GM10248 (cell line): ENCODE measurements at regions of chr16 and their contacts with region 1.

Region 1: DNA sequence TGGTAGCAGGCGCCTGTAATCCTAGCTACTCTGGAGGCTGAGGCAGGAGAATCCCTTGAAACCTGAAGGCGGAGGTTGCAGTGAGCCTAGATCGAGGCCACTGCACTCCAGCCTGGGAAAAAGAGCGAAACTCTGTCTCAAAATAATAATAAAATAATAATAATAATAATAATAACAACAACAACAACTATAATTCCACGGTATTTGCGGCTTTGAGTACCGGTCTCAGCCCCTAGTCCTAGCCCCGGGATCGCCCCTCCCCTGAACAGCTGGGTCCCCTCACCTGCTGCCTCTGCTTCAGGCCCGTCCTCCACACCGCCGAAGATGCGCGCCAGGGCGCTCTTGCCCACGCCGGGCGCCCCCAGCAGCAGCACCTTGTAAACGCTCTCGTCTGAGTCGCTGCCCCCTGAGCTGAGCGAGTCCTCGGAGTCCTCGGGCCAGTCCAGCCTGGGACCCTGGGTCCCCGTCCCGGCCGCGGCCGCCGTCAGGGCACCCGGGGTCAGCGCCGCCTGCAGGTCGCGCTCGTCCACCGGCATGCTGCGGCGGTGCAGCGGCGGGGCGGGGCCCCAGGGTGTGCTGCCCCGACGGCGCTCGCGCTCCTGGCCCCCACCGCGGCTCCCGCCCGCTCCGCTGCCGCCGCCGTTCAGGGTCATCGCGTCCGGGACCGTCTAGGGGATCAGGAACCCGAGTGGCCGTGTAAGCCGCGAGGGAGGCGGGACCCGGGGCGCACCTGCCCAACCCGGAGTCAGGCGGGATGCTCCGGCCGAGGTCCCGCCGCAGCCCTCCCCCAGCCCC is 611 bp downstream of the RRAD start:
- DNase-seq: peak; percentile 83
- CTCF ChIP-seq: peak; percentile 60

Region 2: DNA sequence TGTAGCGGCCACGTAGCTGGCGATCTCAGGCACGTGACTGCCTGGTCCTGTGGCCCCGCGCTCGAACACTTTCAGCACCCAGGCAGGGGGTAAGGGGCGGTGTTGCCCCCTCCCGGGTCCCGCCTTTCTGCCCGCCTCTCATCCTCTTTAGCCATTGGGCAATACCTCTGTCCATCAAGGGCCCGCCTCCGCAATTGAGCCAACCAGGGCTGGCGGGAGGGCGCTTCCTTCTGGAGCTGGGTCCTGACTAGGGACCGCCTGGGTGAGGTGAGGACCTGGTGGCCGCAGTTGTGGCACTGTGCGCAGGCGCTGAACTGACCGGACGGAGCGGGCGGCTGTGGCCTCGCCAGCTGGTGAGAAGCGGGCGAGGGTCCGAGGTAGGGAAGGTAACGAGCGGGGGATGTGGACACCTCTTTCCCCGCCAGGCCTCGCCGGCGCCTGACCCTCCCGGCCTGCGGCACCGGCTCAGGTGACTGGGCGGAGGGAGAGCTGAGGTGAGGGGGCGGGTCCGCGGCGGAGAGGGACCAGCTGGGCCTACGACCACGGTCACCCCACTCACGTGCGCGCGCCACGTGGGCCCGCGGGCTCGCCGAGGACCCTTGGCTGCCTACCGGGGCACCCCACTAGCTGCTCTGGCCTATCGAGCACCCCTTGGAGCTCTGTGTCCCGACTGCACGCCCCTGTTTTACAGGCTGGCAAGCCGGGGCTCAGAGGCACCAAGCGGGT is 44.3 kb before region 1 on chr16 and contains the start of gene PDP2:
- CTCF ChIA-PET with region 1: interaction called, 10 read pairs
- POLR2A ChIA-PET with region 1: no interaction called
- DNase-seq: peak; percentile 96
- CTCF ChIP-seq: no peak

Region 3: GRCh38 chr16:66886346-66886745 is 38.4 kb before region 1 on chr16:
- CTCF ChIA-PET with region 1: interaction called, 115 read pairs
- POLR2A ChIA-PET with region 1: interaction called, 3 read pairs
- DNase-seq: no peak
- CTCF ChIP-seq: no peak

Region 4: GRCh38 chr16:66911112-66911511 is 13.6 kb before region 1 on chr16:
- CTCF ChIA-PET with region 1: interaction called, 11 read pairs
- POLR2A ChIA-PET with region 1: no interaction called
- DNase-seq: no peak
- CTCF ChIP-seq: no peak

Region 5: DNA sequence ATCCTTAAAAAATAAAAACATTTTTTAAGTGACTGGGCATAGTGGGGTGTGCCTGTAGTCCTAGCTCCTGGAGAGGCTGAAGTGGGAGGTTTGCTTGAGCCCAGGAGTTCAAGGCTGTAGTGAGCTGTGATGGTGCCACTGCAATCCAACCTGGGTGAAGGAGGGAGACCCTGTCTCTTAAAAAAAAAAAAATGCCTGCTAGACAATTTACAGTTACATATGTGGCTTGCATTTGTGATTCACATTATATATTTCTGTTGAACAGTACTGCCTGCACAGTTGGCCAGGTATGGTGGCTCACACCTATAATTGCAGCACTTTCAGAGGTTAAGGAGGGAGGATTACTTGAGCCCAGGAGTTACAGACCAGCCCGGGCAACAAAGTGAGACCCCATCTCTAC is 127.7 kb after region 1 on chr16:
- CTCF ChIA-PET with region 1: no interaction called
- POLR2A ChIA-PET with region 1: no interaction called
- DNase-seq: no peak
- CTCF ChIP-seq: no peak